SK-N-SH (cell line): ENCODE measurements at regions of chr13 and their contacts with region 1.

Region 1: DNA sequence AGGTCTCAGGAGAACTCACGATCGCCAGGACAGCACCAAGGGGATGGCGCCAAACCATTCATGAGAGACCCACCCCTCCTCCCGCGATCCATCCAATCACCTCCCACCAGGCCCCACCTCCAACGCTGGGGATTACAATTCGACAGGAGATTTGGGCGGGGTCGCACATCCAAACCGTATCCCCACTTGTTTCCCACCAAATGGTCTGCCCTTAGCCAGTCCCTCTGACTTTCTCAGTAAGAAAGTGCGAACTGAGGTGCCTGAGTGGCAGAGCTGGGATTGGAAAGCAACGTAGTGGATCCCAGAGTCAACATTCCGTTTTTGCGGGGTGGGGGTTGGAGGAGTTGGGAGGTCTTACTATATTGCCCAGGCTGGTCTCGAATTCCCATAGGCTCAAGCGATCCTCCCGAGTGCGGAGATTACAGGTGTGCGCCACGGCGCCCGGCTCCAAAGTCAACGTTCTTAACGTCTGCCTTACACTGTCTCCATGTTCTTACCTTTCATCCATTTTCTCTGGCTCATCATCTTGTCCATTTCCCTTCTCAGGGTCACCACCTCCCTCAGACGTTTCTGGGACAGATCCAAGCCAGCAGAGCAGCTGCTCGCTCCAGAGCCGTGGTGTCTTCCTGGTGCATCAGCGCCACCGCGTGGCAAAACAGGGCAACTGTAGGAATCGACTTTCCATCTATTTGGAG is 102.7 kb upstream of the ABCC4 start:
- DNase-seq: peak; percentile 81
- H3K4me3 ChIP-seq: peak overlapping the region in 1 of 2 experiments; percentile 42; a peak in 1 of 4 replicates
- H3K27ac ChIP-seq: no peak overlapping the region
- H3K4me1 ChIP-seq: peaks cover 0 to 10% of the 10 kb centered on the region in 2 experiments; a peak in 1 of 4 replicates
- H3K27me3 ChIP-seq: no peaks in the 10 kb centered on the region
- CTCF ChIP-seq: peak; percentile 96
- EP300 ChIP-seq: no peak
- RAD21 ChIP-seq: peak; percentile 100

Region 2: GRCh38 chr13:95181586-95181985 is 222.4 kb before region 1 on chr13:
- CTCF ChIA-PET with region 1: interaction called, 18 read pairs
- POLR2A ChIA-PET with region 1: no interaction called
- DNase-seq: no peak
- H3K4me3 ChIP-seq: no peak overlapping the region
- H3K27ac ChIP-seq: no peak overlapping the region
- H3K4me1 ChIP-seq: no peaks in the 10 kb centered on the region; a peak in 1 of 4 replicates
- H3K27me3 ChIP-seq: no peaks in the 10 kb centered on the region
- CTCF ChIP-seq: no peak
- EP300 ChIP-seq: no peak
- RAD21 ChIP-seq: no peak

Region 3: GRCh38 chr13:95201814-95202651 is 201.9 kb before region 1 on chr13:
- CTCF ChIA-PET with region 1: interaction called, 29 read pairs
- POLR2A ChIA-PET with region 1: no interaction called
- DNase-seq: peak; percentile 14
- H3K4me3 ChIP-seq: no peak overlapping the region
- H3K27ac ChIP-seq: no peak overlapping the region
- H3K4me1 ChIP-seq: peaks cover 0 to 6% of the 10 kb centered on the region in 2 experiments; a peak in 1 of 4 replicates
- H3K27me3 ChIP-seq: no peaks in the 10 kb centered on the region
- CTCF ChIP-seq: no peak
- EP300 ChIP-seq: no peak
- RAD21 ChIP-seq: peak; percentile 9; the same call in 1 of the 2 replicates

Region 4: DNA sequence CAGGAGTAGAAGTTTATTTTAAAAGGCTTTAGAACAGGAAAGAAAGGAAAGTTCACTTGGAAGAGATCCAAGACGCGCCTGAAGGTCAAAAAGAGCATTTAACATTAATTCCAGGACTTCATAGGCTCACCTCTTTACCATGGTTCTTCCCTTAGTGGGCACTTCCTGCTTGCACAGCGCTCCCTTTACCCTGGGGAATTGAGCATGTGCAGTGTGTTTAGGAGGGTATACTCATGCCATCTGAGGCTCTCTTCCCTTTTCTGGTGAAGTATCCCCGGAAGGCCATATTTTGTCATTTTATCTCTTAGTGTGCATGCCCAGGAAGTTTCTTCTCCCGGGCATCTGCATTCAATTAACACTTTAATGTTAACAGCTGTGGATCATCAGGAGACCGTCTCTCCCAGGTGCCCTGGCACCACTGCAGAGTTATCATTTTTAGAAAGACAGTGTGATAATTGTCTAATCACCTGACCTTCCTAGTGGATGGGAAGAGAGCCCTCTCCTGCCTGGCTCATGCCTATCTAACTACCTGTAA is 36.6 kb before region 1 on chr13:
- CTCF ChIA-PET with region 1: interaction called, 19 read pairs
- POLR2A ChIA-PET with region 1: no interaction called
- DNase-seq: peak; percentile 34
- H3K4me3 ChIP-seq: no peak overlapping the region
- H3K27ac ChIP-seq: peak overlapping the region in 1 of 2 experiments; percentile 4; a peak in 1 of 4 replicates
- H3K4me1 ChIP-seq: peaks cover 0 to 6% of the 10 kb centered on the region in 2 experiments; a peak in 2 of 4 replicates
- H3K27me3 ChIP-seq: no peaks in the 10 kb centered on the region
- CTCF ChIP-seq: no peak
- EP300 ChIP-seq: peak in 1 of 2 experiments; percentile 63; a peak in 1 of 4 replicates
- RAD21 ChIP-seq: no peak

Region 5: DNA sequence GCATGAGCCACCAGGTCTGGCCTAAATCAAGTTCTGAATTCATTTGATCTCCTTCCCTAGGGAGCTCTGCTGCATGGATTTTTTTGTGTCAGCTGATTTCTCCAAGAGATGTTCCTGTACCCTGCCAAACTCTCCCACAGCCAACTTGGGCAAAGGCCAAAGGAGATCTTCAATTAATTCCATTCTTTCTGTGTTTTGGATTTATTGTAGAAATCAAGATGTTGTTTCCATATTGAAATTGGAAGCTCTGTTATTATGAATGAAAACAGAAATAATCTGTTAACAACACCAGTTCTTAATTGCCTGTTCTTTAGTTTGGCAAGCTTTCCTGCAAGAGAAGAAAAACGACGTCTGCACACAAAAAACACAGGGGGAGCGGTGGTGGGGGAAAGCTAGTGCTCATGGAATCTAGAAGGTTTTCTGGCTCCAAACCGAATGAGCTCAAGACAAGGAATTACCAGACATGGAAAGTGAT is 16.2 kb before region 1 on chr13:
- CTCF ChIA-PET with region 1: interaction called, 55 read pairs
- POLR2A ChIA-PET with region 1: no interaction called
- DNase-seq: no peak
- H3K4me3 ChIP-seq: no peak overlapping the region
- H3K27ac ChIP-seq: no peak overlapping the region
- H3K4me1 ChIP-seq: no peaks in the 10 kb centered on the region
- H3K27me3 ChIP-seq: no peaks in the 10 kb centered on the region; the same call in 1 of the 2 replicates
- CTCF ChIP-seq: no peak
- EP300 ChIP-seq: no peak
- RAD21 ChIP-seq: no peak

Region 6: GRCh38 chr13:95438297-95438696 is 34.3 kb after region 1 on chr13:
- CTCF ChIA-PET with region 1: interaction called, 44 read pairs
- POLR2A ChIA-PET with region 1: no interaction called
- DNase-seq: peak; percentile 45
- H3K4me3 ChIP-seq: no peak overlapping the region
- H3K27ac ChIP-seq: no peak overlapping the region
- H3K4me1 ChIP-seq: no peaks in the 10 kb centered on the region; a peak in 1 of 4 replicates
- H3K27me3 ChIP-seq: no peaks in the 10 kb centered on the region
- CTCF ChIP-seq: no peak
- EP300 ChIP-seq: 0 out of 4 replicates have a peak, but pooled peaks of 1 of the 2 experiments have one; percentile 34
- RAD21 ChIP-seq: no peak

Region 7: GRCh38 chr13:95474992-95475391 is 71.0 kb after region 1 on chr13:
- CTCF ChIA-PET with region 1: interaction called, 63 read pairs
- POLR2A ChIA-PET with region 1: no interaction called
- DNase-seq: no peak
- H3K4me3 ChIP-seq: no peak overlapping the region
- H3K27ac ChIP-seq: no peak overlapping the region
- H3K4me1 ChIP-seq: peaks cover 0 to 4% of the 10 kb centered on the region in 2 experiments; a peak in 1 of 4 replicates
- H3K27me3 ChIP-seq: no peaks in the 10 kb centered on the region
- CTCF ChIP-seq: no peak
- EP300 ChIP-seq: no peak
- RAD21 ChIP-seq: no peak